Left colon (tissue), 2 donors: ENCODE measurements at regions of chr13 and their contacts with region 1.

Region 1: DNA sequence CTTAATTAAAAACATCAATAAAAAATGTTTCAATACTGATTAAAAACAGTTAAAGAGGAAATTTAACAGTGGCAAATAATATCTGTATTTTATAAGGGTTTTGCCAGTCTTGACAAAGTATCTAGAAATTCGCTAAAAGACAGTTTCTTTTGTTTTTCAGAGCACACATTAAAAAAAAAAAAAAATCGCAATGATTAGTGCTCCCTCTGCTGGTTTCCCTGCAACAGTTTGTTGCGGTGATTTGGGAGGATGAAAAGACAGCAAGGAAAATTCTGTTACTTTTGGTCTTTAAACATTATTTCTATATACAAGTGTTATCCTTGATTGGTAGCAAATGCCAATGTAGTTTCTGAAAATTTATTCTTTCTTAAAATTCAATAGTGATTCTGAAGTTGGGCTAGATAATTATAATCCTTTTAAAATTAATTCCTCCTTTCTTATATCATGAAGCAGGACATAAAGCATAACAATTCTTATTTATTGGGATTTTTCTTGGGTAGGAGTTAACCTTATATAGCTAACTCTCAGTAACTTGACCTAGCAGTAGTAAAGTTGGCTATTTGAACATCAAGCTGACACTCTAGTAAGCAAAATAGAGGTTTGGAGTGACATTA is 23.1 kb upstream of the SPRY2 start:
- DNase-seq: no peak
- ATAC-seq: no peak

Region 2: DNA sequence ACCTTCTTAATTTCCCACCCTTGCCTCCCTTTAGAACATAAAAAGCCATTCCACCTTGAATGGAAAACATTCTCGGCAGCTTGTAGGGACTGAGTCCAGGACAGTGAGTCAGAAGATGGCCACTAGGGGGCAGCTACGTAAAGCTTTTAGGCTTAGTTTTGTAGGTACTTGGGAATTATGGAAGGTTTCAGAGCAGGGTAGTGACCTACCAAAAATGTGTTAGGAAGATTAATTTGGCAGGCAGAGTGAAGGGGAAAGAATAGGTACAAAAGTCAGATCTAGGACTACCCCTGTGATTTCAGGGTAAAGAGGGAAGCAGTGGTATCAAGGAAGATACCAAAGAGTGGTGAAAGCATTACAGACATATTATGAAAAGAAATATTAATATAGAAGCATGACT is 684.7 kb before region 1 on chr13:
- intact Hi-C with region 1: loop called in 1 of 2 experiments (anchors 10 kb)
- DNase-seq: peak; percentile 56 to 89
- ATAC-seq: peak; percentile 85

Region 3: DNA sequence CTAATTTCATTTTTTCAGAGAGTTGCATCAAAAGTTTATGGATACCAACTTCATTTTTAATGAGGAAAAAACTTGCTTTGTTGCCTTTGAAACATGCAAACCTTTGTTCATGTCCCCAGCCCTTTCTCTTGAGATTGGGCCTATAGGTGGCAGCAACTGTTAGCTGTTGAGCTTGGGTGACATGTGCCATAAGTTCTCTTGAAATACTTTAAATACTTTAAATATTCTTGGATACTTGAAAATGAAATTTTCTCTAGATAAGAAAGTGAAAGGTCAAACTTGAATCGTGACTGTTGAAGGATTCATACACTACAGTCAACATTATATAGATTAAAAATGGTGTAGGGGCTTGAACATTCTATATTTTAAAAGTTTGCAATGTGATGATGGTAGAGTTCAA is 588.2 kb before region 1 on chr13:
- intact Hi-C with region 1: loop called in 1 of 2 experiments (anchors 10 kb)
- DNase-seq: peak; percentile 21 to 38
- ATAC-seq: peak; percentile 67

Region 4: DNA sequence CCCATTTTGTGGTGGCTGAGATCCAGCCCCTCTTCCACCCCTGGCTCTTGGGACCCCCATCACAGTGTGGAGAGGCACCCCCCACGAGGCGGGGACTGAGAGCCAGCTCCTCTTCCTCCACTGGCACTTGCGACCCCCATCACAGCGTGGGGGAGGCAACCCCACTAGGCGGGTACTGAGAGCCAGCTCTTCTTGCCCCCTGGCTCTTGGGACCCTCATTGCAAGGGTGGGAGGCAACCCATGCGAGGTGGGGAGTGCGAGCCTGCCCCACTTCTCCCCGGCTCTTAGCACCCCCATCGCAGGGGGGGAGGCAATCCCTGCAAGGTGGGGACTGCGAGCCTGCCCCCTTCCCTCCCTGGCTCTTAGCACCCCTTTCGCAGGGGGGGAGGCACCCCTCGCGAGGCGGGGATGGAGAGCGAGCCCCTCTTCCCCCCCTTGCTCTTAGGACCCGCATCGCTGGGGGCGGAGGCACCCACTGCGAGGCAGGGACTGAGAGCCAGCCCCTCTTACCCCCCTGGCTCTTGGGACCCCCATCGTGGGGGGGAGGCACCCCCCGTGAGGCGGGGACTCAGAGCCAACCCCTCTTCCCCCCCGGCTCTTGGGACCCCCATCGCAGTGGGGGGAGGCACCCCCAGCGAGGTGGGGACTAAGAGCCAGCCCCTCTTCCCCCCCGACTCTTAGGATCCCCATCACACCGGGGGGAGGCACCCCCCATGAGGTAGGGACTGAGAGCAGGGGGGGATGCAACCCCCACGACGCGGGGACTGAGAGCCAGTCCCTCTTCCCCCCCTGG is 341.6 kb after region 1 on chr13:
- intact Hi-C with region 1: no loop called
- DNase-seq: no peak
- ATAC-seq: no peak